ENCODE measurements at regions of chr17 and their contacts with region 1.

Region 1: DNA sequence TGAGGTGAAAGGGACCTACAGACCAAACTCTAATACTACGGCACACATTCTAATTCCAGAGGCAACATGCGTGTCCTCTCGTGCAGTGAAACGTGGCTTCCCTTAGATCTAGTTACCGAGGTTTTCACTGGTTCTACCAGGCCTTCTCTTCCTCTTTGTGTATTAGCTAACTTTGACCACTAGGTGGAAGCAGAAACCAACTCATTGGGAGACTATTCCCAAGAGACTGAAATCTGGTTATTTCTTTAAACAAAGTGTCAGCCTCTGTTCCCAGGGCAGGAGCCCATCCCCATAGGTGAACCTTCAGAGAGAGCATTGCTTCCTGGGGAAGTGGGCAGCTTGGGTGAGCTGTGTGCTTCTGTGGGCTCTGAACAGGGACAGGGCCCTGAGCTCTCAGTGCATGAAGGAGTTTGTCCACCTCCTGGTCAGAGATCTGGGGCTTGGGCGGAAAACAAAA is 19.7 kb upstream of the RCVRN start:
- DNase-seq: peak in 3 of 10 donors; percentile 8 to 83 (median 28)

Region 2: GRCh38 chr17:9865586-9865985 is 59.2 kb before region 1 on chr17:
- intact Hi-C with region 1: no loop called
- DNase-seq: no peak

Region 3: GRCh38 chr17:9987779-9988574 is 63.2 kb after region 1 on chr17:
- intact Hi-C with region 1: loop called (anchors 10 kb)
- DNase-seq: peak in 2 of 10 donors; percentile 45 to 91

Region 4: GRCh38 chr17:10226930-10227685 is 302.3 kb after region 1 on chr17:
- intact Hi-C with region 1: loop called (anchors 10 kb)
- DNase-seq: peak in 7 of 10 donors; percentile 38 to 91 (median 61)

Region 5: DNA sequence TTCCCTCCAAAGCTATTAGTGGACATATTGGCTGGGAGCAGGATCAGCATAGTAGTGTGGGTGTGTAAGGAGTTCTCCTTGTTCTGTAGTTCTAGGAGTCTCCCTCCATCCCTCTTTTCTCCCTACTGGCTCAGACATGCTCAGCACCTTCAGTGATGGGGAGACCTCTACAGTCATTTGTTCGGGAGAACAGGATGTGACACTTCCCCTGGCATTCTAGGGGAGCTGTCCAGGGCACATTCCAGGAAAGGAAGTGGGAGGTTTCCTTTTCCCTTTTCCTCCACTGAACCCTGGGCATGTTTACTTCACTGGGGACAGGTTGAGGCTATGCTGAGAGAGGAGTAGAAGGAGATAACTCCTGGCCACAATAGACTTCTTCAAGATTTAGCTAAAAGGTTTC is 361.6 kb after region 1 on chr17:
- intact Hi-C with region 1: loop called (anchors 10 kb)
- DNase-seq: no peak

Region 6: DNA sequence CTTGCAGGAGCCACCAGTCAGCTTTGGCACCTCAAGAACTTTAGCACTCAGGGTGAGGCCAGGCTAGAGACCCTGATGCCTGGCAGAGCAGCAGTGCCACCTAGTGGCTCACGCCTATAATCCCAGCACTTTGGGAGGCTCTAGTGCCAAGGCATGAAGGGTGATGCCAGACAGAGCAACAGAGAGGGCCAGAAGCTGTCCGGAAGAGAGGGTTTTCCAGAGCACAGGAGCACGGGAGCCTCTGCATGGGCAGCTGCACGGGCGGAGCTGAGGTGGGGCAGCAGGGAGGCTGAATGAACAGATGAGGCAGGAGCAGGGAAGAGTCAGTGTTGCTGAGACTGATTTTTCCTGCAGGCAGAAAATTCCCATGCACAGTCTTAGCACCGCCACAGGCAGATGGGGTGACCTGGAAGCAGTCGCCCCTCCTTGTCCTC is 693.5 kb after region 1 on chr17:
- intact Hi-C with region 1: loop called (anchors 2 kb)
- DNase-seq: peak; percentile 43 to 96 (median 71)

Measured in posterior cingulate gyrus (tissue), 11 donors.